Activated B cell treated with CpG ODN at 0.5 μM for 24 hours (primary cell): ENCODE measurements at regions of chr7 and their contacts with region 1.

Region 1: DNA sequence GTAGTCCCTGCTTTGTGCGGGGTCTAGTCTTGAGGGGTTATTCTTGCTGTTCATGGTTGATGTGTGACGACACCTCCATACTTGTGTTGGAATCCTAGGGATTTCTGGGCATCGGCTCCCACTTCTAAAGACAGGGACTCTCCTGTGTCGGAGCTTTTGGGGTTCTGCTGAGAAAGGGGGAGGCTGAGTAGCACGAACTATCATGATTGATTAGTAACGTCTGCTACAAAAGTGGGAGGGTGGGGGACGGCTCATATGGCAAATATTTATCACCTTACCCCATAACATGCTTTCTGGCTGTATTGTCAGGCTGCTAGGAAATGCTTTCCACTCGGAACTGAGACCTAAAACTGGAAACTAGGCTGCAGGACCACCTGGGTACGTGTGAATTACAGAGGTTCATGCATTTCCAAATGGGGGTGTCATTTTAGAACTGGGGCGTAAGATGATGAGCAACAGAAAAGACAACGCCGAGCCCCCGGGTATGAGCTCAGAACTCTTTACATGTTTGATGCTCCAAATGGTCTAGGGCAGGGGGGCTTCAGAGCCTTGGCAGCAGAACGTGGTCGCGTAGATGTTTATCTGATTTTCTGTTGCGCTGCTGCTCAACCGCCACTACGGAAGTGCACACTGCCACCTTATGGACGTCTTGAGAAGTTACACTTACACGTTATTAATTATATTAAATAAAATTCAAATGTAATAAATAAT is 15.1 kb upstream of the NME8 start:
- DNase-seq: peak; percentile 23
- ATAC-seq: peak; percentile 71
- H3K4me3 Mint-ChIP-seq: peak overlapping the region; percentile 81
- H3K27ac Mint-ChIP-seq: no peak overlapping the region
- H3K4me1 Mint-ChIP-seq: peaks cover 15% of the 10 kb centered on the region
- H3K27me3 Mint-ChIP-seq: no peaks in the 10 kb centered on the region
- CTCF ChIP-seq: peak; percentile 87

Region 2: DNA sequence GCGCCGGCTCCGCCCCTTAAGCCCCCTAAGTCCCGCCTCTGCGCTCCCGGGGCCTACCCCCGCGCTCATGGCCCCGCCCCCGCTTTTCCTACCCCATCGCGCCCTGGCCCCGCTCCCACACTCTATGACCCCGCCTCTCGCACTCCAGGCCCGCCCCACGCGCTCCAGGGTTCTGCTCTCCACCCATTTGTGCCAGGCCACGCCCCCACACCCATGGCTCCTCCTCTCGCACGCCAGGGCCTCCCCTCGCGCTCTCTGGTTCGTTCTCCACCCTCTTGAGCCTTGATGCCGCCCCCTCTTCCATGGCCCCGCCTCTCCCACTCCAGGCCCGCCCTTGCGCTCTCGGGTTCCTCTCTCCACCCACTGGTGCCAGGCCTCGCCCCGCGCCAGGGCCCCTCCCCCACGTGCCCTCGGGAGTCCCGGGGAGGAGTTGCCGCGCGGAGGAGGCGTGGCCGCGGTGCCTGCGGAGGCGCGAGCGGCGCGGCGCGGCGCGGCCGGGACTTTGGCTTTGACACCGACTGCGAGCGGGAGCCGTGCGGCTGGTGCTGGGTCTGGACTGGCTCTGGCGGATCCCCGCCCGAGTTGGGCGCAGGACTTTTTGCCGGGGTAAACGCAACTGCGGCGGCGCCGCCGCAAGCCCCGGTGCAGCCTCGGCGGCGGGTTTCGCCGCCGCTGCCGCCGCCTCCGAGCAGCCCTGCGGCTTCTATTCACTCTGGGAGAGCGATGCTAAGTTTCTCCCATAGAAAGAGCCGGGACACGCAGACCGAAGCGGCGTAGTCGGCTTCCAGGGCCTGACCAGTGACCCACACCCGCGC is 1680.3 kb before region 1 on chr7 and contains the start of gene EEPD1:
- CTCF ChIA-PET with region 1: no interaction called
- POLR2A ChIA-PET with region 1: no interaction called
- intact Hi-C with region 1: no loop called
- DNase-seq: peak; percentile 100
- ATAC-seq: peak; percentile 92
- H3K4me3 Mint-ChIP-seq: peak within 1 kb of the TSS; percentile 80
- H3K27ac Mint-ChIP-seq: no peak within 1 kb of the TSS
- H3K4me1 Mint-ChIP-seq: peaks cover 11% of the 10 kb centered on the region
- H3K27me3 Mint-ChIP-seq: peaks cover 3% of the 10 kb centered on the region
- CTCF ChIP-seq: no peak
- total RNA-seq, gene EEPD1: 0.59 and 0.64 TPM in 2 replicates

Region 3: GRCh38 chr7:36473454-36474282 is 1359.6 kb before region 1 on chr7:
- CTCF ChIA-PET with region 1: no interaction called
- POLR2A ChIA-PET with region 1: no interaction called
- intact Hi-C with region 1: loop called (anchors 10 kb)
- DNase-seq: no peak
- ATAC-seq: no peak
- H3K4me3 Mint-ChIP-seq: no peak overlapping the region
- H3K27ac Mint-ChIP-seq: no peak overlapping the region
- H3K4me1 Mint-ChIP-seq: no peaks in the 10 kb centered on the region
- H3K27me3 Mint-ChIP-seq: peaks cover 3% of the 10 kb centered on the region
- CTCF ChIP-seq: no peak

Region 4: DNA sequence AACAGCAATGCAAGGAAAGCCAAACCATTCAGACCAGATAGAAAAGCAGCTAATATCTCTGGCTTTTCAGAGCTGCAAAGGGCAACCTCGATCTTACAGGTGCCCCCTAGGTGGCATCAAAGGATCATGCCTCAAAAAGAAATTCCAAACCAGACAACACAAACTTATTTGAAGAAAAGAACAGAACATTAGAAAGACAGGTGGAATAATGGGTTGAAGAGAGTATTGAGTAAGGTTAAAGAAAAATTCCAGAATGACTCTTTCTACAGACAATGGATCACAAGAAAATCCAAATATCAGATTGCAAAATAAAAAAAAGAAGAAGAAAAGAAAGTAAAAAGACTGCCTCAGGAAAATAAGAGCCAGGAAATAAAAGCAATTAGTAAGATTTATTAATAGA is 598.3 kb before region 1 on chr7:
- CTCF ChIA-PET with region 1: interaction called, 15 read pairs
- POLR2A ChIA-PET with region 1: no interaction called
- intact Hi-C with region 1: loop called (anchors 1 kb)
- DNase-seq: no peak
- ATAC-seq: no peak
- H3K4me3 Mint-ChIP-seq: no peak overlapping the region
- H3K27ac Mint-ChIP-seq: no peak overlapping the region
- H3K4me1 Mint-ChIP-seq: peaks cover 2% of the 10 kb centered on the region
- H3K27me3 Mint-ChIP-seq: no peaks in the 10 kb centered on the region
- CTCF ChIP-seq: no peak

Region 5: GRCh38 chr7:37495574-37496184 is 337.6 kb before region 1 on chr7:
- CTCF ChIA-PET with region 1: interaction called, 4 read pairs
- POLR2A ChIA-PET with region 1: no interaction called
- intact Hi-C with region 1: loop called (anchors 1 kb)
- DNase-seq: no peak
- ATAC-seq: peak; percentile 58
- H3K4me3 Mint-ChIP-seq: no peak overlapping the region
- H3K27ac Mint-ChIP-seq: no peak overlapping the region
- H3K4me1 Mint-ChIP-seq: no peaks in the 10 kb centered on the region
- H3K27me3 Mint-ChIP-seq: no peaks in the 10 kb centered on the region
- CTCF ChIP-seq: peak; percentile 91

Region 6: DNA sequence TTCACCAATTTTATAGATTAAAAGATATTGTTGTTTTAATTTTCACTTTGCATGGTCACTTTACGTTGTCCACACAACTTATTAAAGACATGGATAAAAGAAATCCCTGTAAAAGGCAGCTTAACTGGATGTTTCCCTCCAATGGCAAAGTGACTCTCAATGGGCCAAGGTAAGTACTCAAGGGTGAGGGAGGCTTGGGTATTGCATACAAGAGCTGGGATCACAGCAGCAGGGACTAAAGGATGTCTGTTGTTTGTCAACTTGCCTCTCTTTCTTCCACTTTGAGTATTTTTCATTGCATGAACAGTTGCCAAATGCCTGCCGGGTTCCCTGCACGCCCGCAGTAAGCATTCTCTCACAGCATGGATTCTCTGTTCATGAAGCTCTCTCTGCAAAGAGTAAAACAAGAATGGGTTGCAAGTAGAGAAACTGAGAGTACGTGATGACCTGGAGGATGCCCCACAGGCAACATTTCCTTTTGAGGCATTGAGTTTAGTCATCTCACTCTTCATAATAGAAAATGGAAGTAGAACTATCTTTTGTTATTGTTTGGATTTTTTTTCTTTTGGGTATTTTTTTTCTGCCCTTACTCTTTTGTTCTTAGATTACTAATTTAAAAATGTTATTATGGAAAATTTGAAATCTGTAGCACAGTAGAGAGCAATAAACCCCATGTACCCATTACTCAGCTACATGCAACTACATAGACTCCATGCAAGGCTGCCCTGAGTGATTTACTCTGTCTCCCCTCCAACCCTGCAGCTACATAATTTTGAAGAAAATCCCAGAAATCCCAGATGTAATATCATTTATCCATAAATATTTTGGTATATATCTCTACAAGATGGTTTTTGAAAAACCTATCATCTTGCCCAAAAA is 123.4 kb before region 1 on chr7:
- CTCF ChIA-PET with region 1: no interaction called
- POLR2A ChIA-PET with region 1: no interaction called
- intact Hi-C with region 1: no loop called
- DNase-seq: no peak
- ATAC-seq: no peak
- H3K4me3 Mint-ChIP-seq: no peak overlapping the region
- H3K27ac Mint-ChIP-seq: no peak overlapping the region
- H3K4me1 Mint-ChIP-seq: no peaks in the 10 kb centered on the region
- H3K27me3 Mint-ChIP-seq: peaks cover 18% of the 10 kb centered on the region
- CTCF ChIP-seq: no peak

Region 7: GRCh38 chr7:37732253-37732652 is 101.0 kb before region 1 on chr7:
- CTCF ChIA-PET with region 1: interaction called, 6 read pairs
- POLR2A ChIA-PET with region 1: interaction called, 3 read pairs
- intact Hi-C with region 1: loop called (anchors 1 kb)
- DNase-seq: no peak
- ATAC-seq: peak; percentile 87
- H3K4me3 Mint-ChIP-seq: no peak overlapping the region
- H3K27ac Mint-ChIP-seq: no peak overlapping the region
- H3K4me1 Mint-ChIP-seq: peaks cover 2% of the 10 kb centered on the region
- H3K27me3 Mint-ChIP-seq: peaks cover 10% of the 10 kb centered on the region
- CTCF ChIP-seq: no peak

Region 8: DNA sequence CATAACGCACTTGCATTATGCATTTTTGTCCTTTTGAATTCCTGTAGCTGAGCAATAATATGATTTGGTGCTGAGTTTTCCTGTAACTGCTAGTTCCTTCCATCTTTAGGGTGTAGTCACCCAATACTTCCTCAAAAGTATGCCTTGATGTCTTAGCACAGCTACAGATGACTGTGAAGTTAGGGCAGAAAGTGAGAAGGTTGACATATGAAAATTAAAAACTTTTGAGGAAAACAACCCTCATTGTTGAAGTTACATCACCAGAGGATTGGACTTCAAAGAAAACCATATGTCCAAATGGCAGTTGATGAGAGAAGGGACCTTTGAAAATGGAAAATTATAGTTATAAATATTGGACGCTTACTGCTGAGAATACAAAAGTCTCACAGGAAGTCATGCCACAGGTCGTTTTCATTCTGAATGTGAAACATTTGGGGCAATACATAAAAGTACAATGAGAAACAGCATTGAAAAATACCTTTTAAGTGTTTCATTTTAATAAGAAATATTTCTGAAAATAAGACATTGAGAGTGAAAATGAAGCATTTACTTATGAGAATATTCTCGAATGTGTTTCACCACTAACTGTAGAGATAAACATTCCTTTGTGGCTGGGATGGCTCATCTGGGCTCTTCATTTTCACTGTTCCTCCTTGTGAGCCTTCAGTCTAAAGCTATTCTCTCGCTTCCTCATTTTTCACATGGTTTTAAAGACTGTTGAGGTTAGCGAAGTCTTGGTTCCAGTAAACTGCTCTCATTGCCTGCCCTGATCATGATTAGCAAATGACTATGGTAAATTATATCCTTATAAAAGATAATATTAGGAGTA is 46.3 kb before region 1 on chr7:
- CTCF ChIA-PET with region 1: interaction called, 10 read pairs
- POLR2A ChIA-PET with region 1: no interaction called
- intact Hi-C with region 1: loop called (anchors 1 kb)
- DNase-seq: no peak
- ATAC-seq: peak; percentile 89
- H3K4me3 Mint-ChIP-seq: peak overlapping the region; percentile 74
- H3K27ac Mint-ChIP-seq: peak overlapping the region; percentile 99
- H3K4me1 Mint-ChIP-seq: peaks cover 41% of the 10 kb centered on the region
- H3K27me3 Mint-ChIP-seq: no peaks in the 10 kb centered on the region
- CTCF ChIP-seq: no peak